ENCODE measurements at regions of chr9 and their contacts with region 1.

Region 1: DNA sequence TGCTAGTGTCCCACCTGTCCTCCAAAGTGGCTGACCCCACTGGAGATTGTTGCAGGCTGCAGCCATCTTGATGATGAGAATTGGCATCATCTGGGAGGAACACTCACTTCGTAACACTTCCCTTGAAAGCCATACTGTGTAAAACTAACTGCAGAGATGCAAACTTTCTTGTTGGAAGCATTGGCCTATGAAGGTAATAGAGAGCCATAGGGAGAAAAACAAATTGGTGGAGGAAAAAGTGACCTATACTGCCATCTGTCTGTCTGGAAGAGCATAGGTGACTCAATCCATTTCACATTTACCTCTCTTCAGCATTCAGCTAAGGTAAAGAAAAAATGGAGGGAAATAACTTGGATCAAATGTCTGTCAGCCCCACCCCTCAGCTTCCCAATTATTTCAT is 473.4 kb downstream of the NTRK2 start:
- DNase-seq: no peak
- ATAC-seq: peak; percentile 96
- H3K4me3 Mint-ChIP-seq: no peak overlapping the region
- H3K27ac Mint-ChIP-seq: no peak overlapping the region
- H3K4me1 Mint-ChIP-seq: peaks cover 10% of the 10 kb centered on the region
- H3K27me3 Mint-ChIP-seq: no peaks in the 10 kb centered on the region
- CTCF ChIP-seq: no peak

Region 2: DNA sequence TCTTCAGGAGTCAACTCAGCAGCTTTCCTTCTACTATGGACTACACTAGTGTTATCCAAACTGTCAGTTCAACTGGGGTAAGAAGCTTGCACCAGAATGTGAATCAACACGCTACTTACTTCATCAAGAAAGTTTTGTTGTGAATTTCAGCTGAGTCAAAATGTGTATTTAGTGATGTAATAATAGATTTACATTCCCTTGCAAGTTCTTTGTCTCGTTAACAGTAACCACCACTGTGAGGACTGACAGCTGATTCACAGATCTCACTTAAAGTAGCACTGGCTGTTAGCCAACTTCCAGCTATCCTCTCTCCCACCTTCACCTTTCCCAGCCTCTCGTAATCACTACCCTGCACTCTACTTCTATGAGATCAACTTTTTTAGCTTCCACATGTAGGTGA is 28.2 kb before region 1 on chr9:
- CTCF ChIA-PET with region 1: no interaction called
- POLR2A ChIA-PET with region 1: no interaction called
- DNase-seq: no peak
- ATAC-seq: no peak
- H3K4me3 Mint-ChIP-seq: no peak overlapping the region
- H3K27ac Mint-ChIP-seq: no peak overlapping the region
- H3K4me1 Mint-ChIP-seq: no peaks in the 10 kb centered on the region
- H3K27me3 Mint-ChIP-seq: no peaks in the 10 kb centered on the region
- CTCF ChIP-seq: no peak

Region 3: GRCh38 chr9:85156652-85157051 is 13.7 kb after region 1 on chr9:
- CTCF ChIA-PET with region 1: interaction called, 11 read pairs
- POLR2A ChIA-PET with region 1: no interaction called
- DNase-seq: no peak
- ATAC-seq: peak; percentile 81
- H3K4me3 Mint-ChIP-seq: no peak overlapping the region
- H3K27ac Mint-ChIP-seq: no peak overlapping the region
- H3K4me1 Mint-ChIP-seq: peaks cover 19% of the 10 kb centered on the region
- H3K27me3 Mint-ChIP-seq: no peaks in the 10 kb centered on the region
- CTCF ChIP-seq: no peak